Heart right ventricle (tissue), 16 donors: ENCODE measurements at regions of chr7 and their contacts with region 1.

Region 1: DNA sequence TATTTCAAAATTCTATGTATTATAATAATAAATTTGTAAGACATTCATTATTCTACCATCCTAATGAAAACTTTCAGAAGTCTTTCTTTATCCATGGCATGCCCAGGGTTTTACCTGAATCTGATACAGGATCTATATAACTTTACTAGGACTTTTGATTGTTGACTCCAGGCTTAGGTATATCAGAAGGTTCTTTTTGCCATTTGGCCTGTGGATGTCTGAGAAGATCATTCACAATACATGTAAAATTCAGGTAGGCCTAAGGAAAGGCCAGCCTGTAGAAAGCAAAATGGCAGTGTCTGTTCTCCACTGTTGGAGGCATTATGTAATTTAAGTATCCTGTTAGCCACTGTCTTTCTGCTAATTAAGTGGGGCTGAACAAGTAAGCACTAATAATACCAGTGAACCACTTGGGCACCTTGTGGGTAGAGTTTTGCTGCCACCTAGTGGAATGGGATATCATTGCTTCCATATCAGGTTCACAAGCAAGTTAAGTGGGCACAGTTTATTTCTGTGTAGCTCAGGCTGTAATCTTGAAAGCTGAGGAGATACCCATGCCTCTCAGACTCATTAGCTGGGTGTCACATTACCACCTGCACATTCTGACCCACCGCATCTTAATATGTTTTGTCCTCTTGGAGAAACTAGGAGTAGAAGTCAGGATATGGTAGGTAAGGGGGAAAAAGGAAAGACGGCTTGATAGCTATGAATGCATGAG is 105.5 kb downstream of the SEPTIN7 start:
- DNase-seq: peak in 1 of 2 donors; percentile 75
- ATAC-seq: peak; percentile 80 to 93 (median 90)
- H3K4me3 ChIP-seq: no peak overlapping the region
- H3K27ac ChIP-seq: peak overlapping the region in 3 of 10 donors; percentile 9 to 17 (median 11)
- H3K4me1 ChIP-seq: peaks cover 0 to 26% (median 3%) of the 10 kb centered on the region in 9 donors
- H3K27me3 ChIP-seq: no peaks in the 10 kb centered on the region
- CTCF ChIP-seq: peak; percentile 88 to 98 (median 91)

Region 2: GRCh38 chr7:35624299-35625186 is 281.8 kb before region 1 on chr7:
- intact Hi-C with region 1: loop called in 1 of 10 experiments (anchors 10 kb)
- DNase-seq: peak; percentile 10 to 18
- ATAC-seq: peak; percentile 68 to 88 (median 86)
- H3K4me3 ChIP-seq: no peak overlapping the region
- H3K27ac ChIP-seq: no peak overlapping the region
- H3K4me1 ChIP-seq: peaks cover 0 to 8% (median 6%) of the 10 kb centered on the region in 9 donors
- H3K27me3 ChIP-seq: no peaks in the 10 kb centered on the region
- CTCF ChIP-seq: peak; percentile 72 to 89 (median 86)

Region 3: DNA sequence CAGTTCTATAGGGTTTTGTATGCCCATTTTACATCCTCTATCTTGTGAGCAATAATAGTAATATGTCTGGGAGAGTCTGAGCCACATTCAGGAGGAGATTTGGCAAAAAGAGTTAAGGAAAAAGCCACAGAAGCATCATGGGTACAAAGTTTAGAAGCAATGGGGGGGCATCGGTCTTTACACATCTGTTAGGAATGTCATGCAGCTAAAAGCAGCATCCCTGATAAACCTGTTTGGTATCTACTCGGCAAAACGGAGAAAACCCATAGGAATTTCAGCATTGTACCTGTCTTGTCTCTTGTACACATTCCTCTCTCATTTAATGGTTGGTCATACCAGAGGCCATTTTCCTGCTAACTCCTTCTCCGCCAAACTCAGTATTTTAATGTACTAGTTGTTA is 198.9 kb before region 1 on chr7:
- intact Hi-C with region 1: loop called (anchors 1 to 5 kb)
- DNase-seq: no peak
- ATAC-seq: no peak
- H3K4me3 ChIP-seq: no peak overlapping the region
- H3K27ac ChIP-seq: no peak overlapping the region
- H3K4me1 ChIP-seq: peaks cover 0 to 15% (median 8%) of the 10 kb centered on the region in 9 donors
- H3K27me3 ChIP-seq: no peaks in the 10 kb centered on the region
- CTCF ChIP-seq: no peak

Region 4: GRCh38 chr7:35716038-35716803 is 190.1 kb before region 1 on chr7:
- intact Hi-C with region 1: loop called in 3 of 10 experiments (anchors 2 to 5 kb)
- DNase-seq: peak in 1 of 2 donors; percentile 32
- ATAC-seq: peak in 7 of 8 donors; percentile 59 to 76 (median 71)
- H3K4me3 ChIP-seq: peak overlapping the region in 9 of 10 donors; percentile 6 to 46 (median 41)
- H3K27ac ChIP-seq: peak overlapping the region; percentile 44 to 84 (median 71)
- H3K4me1 ChIP-seq: peaks cover 0 to 45% (median 13%) of the 10 kb centered on the region in 9 donors
- H3K27me3 ChIP-seq: no peaks in the 10 kb centered on the region
- CTCF ChIP-seq: no peak

Region 5: DNA sequence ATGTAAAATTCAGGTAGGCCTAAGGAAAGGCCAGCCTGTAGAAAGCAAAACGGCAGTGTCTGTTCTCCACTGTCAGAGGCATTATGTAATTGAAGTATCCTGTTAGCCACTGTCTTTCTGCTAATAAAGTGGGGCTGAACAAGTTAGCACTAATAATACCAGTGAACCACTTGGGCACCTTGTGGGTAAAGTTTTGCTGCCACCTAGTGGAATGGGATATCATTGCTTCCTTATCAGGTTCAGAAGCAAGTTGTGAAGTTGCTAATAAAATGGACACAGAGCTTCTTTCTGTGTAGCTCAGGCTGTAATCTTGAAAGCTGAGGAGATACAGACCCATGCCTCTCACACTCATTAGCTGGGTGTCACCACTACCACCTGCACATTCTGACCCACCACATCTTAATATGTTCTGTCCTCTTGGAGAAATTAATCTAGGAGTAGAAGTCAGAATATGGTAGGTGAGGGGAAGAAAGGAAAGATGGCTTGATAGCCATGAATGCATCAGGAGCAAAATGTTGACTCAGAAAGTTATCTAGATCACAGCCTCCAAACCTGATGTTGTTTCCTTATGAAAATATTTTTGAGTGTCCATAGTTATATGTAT is 69.6 kb after region 1 on chr7:
- intact Hi-C with region 1: loop called in 1 of 10 experiments (anchors 5 kb)
- DNase-seq: peak in 1 of 2 donors; percentile 62
- ATAC-seq: peak in 7 of 8 donors; percentile 47 to 81 (median 75)
- H3K4me3 ChIP-seq: no peak overlapping the region
- H3K27ac ChIP-seq: no peak overlapping the region
- H3K4me1 ChIP-seq: no peaks in the 10 kb centered on the region
- H3K27me3 ChIP-seq: peaks cover 0 to 24% (median 3%) of the 10 kb centered on the region in 7 donors
- CTCF ChIP-seq: peak; percentile 68 to 90 (median 82)

Region 6: GRCh38 chr7:36001546-36001945 is 95.2 kb after region 1 on chr7:
- intact Hi-C with region 1: no loop called
- DNase-seq: no peak
- ATAC-seq: no peak
- H3K4me3 ChIP-seq: no peak overlapping the region
- H3K27ac ChIP-seq: no peak overlapping the region
- H3K4me1 ChIP-seq: no peaks in the 10 kb centered on the region
- H3K27me3 ChIP-seq: no peaks in the 10 kb centered on the region
- CTCF ChIP-seq: no peak

Region 7: GRCh38 chr7:36152756-36153570 is 246.6 kb after region 1 on chr7 and contains the start of gene EEPD1:
- intact Hi-C with region 1: no loop called
- DNase-seq: peak; percentile 100
- ATAC-seq: peak; percentile 96 to 98 (median 97)
- H3K4me3 ChIP-seq: peak within 1 kb of the TSS; percentile 62 to 95 (median 92)
- H3K27ac ChIP-seq: peak within 1 kb of the TSS; percentile 62 to 94 (median 89)
- H3K4me1 ChIP-seq: peaks cover 8 to 54% (median 50%) of the 10 kb centered on the region in 9 donors
- H3K27me3 ChIP-seq: no peaks in the 10 kb centered on the region
- CTCF ChIP-seq: no peak
- total RNA-seq, gene EEPD1: 6.1 to 14.7 (median 8.4) TPM

Region 8: GRCh38 chr7:36171503-36171902 is 265.2 kb after region 1 on chr7:
- intact Hi-C with region 1: no loop called
- DNase-seq: no peak
- ATAC-seq: no peak
- H3K4me3 ChIP-seq: no peak overlapping the region
- H3K27ac ChIP-seq: no peak overlapping the region
- H3K4me1 ChIP-seq: peaks cover 3 to 15% (median 12%) of the 10 kb centered on the region in 9 donors
- H3K27me3 ChIP-seq: no peaks in the 10 kb centered on the region
- CTCF ChIP-seq: no peak

Region 9: DNA sequence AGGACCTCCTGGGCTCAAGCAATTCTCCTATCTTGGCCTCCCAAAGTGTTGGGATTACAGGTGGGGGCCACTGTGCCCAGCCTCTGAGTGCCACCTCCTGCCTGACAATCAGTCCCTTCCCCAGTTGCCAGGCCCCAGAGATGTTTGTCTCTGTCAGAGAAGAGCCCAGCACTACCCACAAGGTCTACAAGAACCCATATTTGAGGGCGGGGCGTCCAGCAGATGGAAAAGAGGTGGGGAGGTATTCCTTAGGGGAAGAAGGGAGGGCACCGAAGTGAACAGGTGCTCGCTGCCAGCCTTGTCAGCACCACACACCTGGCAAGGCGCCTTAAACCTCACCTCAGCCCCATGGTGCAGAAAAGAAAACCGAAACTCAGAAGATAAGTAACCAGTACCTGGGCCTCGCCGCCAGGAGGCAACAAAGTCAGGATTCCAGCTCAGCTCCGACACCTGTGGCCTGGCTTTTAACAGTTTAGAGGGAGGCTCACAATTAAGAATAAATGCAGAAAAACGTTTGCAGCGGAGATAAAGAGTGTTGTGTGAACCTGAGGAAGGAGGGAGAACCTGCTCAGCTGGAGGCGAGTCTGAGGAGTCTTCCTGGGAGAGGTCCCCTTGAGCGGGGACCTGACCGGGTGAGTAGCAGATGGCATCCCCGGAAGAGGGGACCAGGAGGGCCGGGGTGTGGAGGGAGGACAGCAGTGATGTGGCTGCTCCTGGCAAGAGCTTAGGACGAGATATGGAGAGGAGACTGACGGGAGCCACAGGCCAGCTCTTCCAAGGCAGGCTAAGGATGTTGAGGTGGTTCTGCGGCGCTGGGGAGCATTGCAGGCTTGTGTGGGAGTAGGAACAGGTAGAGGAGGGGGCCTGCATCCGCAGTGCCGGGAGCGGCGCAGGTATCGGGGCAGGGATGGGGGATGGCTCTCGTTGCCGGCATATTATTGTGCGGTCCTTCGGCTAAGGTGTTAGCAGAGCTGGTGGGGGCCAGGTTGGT is 406.3 kb after region 1 on chr7:
- intact Hi-C with region 1: loop called in 1 of 10 experiments (anchors 10 kb)
- DNase-seq: no peak
- ATAC-seq: no peak
- H3K4me3 ChIP-seq: no peak overlapping the region
- H3K27ac ChIP-seq: no peak overlapping the region
- H3K4me1 ChIP-seq: peaks cover 0 to 20% (median 6%) of the 10 kb centered on the region in 9 donors
- H3K27me3 ChIP-seq: no peaks in the 10 kb centered on the region
- CTCF ChIP-seq: no peak